Left cardiac atrium (tissue), 4 donors: ENCODE measurements at regions of chr16 and their contacts with region 1.

Region 1: GRCh38 chr16:89489040-89489721 is 1.2 kb downstream of the ANKRD11 start:
- DNase-seq: peak; percentile 87
- ATAC-seq: peak; percentile 41 to 43

Region 2: GRCh38 chr16:89343501-89344457 is 145.4 kb before region 1 on chr16:
- intact Hi-C with region 1: loop called in 1 of 2 experiments (anchors 10 kb)
- DNase-seq: no peak
- ATAC-seq: peak; percentile 51 to 69

Region 3: GRCh38 chr16:89686520-89687091 is 197.4 kb after region 1 on chr16 and contains the start of gene CDK10:
- intact Hi-C with region 1: no loop called
- DNase-seq: peak; percentile 93
- ATAC-seq: peak; percentile 96 to 97
- total RNA-seq, gene CDK10: 22.6 to 28.0 TPM

Region 4: GRCh38 chr16:89958068-89958467 is 468.9 kb after region 1 on chr16:
- intact Hi-C with region 1: no loop called
- DNase-seq: peak; percentile 47
- ATAC-seq: peak; percentile 53 to 69